ENCODE measurements at regions of chr6 and their contacts with region 1.

Region 1: GRCh38 chr6:11496152-11497060 is 41.1 kb upstream of the TMEM170B start:
- DNase-seq: no peak

Region 2: GRCh38 chr6:11129908-11130565 is 366.4 kb before region 1 on chr6:
- intact Hi-C with region 1: loop called in 1 of 2 experiments (anchors 5 kb)
- DNase-seq: no peak

Region 3: DNA sequence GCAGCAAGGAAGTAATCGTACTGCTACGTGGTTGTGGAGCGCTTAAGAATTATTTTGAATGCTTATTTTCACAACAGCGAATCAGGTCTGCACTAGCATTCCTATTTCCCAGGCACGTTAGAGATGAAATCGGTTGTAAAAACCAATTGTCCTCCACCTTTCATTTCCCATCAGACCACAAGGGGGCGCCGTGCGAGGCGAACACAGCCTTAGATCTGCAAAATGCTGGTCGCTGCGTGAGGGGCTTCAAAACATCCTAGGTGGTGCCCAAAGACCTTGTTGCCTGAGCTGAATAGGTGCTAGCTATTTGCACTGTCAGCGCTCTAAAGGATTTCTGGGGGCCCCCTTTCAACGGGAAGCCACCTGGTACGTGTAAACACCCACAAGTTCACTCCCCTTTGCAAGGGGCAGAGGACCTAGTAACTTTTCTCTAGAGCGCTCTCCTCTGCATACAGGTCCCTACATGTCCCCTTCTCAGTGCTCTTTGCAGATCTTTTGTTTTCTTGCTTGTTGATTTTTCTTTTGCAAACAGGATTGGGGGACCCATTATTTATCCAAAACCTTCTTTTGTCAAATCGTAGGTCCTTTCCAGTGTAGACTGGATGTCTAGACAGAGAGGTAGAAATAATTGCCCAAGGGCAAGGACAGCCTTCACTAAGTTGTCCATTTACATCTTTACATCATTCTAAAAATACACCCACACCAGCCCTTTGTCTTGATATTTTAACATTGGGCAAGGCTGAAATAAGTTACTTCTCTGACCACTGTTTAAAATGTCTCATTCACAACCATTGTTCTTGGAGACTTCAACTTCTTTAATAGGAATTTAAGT is 323.7 kb before region 1 on chr6:
- intact Hi-C with region 1: loop called in 1 of 2 experiments (anchors 10 kb)
- DNase-seq: peak; percentile 89

Region 4: GRCh38 chr6:11241793-11242201 is 254.6 kb before region 1 on chr6:
- intact Hi-C with region 1: loop called (anchors 10 kb)
- DNase-seq: peak; percentile 93

Region 5: GRCh38 chr6:11434565-11435326 is 61.7 kb before region 1 on chr6:
- intact Hi-C with region 1: loop called in 1 of 2 experiments (anchors 10 kb)
- DNase-seq: no peak

Measured in posterior vena cava (tissue), 2 donors.